ENCODE measurements at regions of chr5 and their contacts with region 1.

Region 1: GRCh38 chr5:147576646-147577535 is 67.0 kb upstream of the DPYSL3 start:
- DNase-seq: peak; percentile 45
- H3K4me3 ChIP-seq: no peak overlapping the region
- H3K27ac ChIP-seq: no peak overlapping the region
- H3K4me1 ChIP-seq: no peaks in the 10 kb centered on the region
- H3K27me3 ChIP-seq: no peaks in the 10 kb centered on the region
- CTCF ChIP-seq: peak; percentile 86 to 92
- POLR2A ChIP-seq: no peak

Region 2: DNA sequence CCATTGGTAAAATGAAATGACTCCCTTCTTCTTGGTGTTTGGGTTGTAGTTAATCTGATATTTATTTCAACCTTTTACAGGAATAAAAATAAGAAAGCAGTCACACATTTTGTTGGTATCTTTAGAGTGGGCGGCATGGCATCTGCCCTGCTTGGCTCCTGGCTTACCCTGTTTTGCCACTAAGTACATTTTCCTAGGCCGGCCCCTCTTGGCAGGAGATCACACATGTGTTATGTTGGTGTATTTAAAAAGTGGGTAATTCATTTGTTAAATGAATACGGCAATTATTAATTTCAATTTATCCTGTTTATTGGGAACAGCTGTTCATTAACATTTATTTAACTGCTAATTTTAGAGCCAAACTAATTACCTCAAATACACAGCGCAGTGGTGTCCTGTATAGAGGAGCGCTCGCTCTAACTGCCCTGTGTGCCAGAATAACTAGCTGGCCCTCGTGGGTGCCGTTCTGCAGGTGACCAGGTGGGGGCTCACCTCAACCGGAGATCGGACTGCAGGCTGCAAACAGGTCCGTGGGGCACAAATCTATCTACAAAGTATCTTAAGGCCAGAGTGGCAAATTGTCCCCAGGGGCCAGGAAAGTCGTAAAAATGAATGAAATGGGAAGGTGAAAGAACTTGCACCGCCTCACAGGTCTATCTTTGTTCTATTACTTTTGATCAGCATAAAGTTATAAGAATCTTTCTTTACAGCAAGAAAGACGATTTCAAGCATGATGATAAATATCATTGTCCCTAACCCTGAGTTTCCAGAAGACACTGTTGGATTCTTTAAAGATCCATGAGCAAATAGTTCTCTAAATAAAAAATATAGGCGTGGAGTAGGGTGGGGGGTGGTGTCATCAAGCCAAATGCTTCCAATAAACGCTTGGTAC is 1034.7 kb before region 1 on chr5:
- CTCF ChIA-PET with region 1: interaction called, 4 read pairs
- POLR2A ChIA-PET with region 1: no interaction called
- dilution Hi-C with region 1: no loop called
- intact Hi-C with region 1: loop called (anchors 10 kb)
- DNase-seq: peak; percentile 66
- H3K4me3 ChIP-seq: no peak overlapping the region
- H3K27ac ChIP-seq: no peak overlapping the region
- H3K4me1 ChIP-seq: no peaks in the 10 kb centered on the region
- H3K27me3 ChIP-seq: peaks cover 0 to 2% of the 10 kb centered on the region in 2 experiments
- CTCF ChIP-seq: peak; percentile 72 to 81
- POLR2A ChIP-seq: no peak

Region 3: DNA sequence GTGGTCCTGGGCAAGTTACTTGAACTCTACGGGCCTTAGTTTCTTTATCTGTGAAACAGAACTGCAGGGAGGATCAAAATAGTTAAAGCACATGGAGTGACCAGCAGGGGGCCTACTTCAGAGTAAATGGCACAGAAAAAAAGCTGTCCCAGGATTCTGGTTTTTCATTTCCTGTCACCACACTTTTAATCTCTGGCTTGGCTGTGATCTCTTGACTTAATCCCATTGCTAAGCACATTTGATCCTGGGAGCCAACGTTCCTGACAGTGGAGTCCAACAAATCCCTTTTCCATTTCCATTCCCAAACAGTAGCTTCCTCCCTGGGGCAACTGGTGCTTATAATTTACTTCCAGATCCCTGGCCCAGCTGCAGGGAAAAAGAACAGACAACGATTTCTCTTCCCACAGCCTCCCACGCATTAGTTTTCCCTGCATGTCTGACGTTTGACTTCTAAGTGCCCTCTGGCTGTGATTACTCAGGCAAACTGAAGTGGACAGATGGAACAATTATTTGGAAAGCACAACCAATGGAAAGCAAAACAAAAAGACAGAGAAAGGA is 478.6 kb before region 1 on chr5:
- CTCF ChIA-PET with region 1: interaction called, 64 read pairs
- POLR2A ChIA-PET with region 1: no interaction called
- dilution Hi-C with region 1: no loop called
- intact Hi-C with region 1: loop called (anchors 1 kb)
- DNase-seq: peak; percentile 23
- H3K4me3 ChIP-seq: no peak overlapping the region
- H3K27ac ChIP-seq: no peak overlapping the region
- H3K4me1 ChIP-seq: no peaks in the 10 kb centered on the region
- H3K27me3 ChIP-seq: no peaks in the 10 kb centered on the region
- CTCF ChIP-seq: peak; percentile 51 to 54
- POLR2A ChIP-seq: no peak

Region 4: DNA sequence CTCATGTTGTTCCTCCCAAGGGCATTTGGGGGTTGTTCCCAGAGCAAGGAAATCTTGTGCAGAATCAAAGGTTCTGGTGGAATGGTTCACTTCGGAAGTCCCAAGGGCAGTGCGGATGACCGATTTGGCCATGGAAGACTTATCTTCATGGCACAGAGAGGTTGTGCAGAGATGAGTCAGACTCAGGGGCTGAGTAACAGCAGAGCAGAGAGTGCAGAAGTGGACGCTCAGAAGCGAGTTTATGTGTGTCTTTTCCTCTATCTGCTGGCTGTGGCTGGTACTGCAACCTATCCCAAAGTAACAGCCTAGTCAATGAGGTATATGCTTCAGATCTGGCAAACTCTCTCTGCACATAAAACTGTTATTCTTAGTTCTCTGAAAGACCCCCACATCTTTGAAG is 185.1 kb before region 1 on chr5:
- CTCF ChIA-PET with region 1: interaction called, 63 read pairs
- POLR2A ChIA-PET with region 1: no interaction called
- dilution Hi-C with region 1: no loop called
- intact Hi-C with region 1: loop called (anchors 1 kb)
- DNase-seq: peak; percentile 80
- H3K4me3 ChIP-seq: no peak overlapping the region
- H3K27ac ChIP-seq: no peak overlapping the region
- H3K4me1 ChIP-seq: peaks cover 12% of the 10 kb centered on the region
- H3K27me3 ChIP-seq: no peaks in the 10 kb centered on the region
- CTCF ChIP-seq: peak; percentile 63 to 73
- POLR2A ChIP-seq: no peak

Region 5: DNA sequence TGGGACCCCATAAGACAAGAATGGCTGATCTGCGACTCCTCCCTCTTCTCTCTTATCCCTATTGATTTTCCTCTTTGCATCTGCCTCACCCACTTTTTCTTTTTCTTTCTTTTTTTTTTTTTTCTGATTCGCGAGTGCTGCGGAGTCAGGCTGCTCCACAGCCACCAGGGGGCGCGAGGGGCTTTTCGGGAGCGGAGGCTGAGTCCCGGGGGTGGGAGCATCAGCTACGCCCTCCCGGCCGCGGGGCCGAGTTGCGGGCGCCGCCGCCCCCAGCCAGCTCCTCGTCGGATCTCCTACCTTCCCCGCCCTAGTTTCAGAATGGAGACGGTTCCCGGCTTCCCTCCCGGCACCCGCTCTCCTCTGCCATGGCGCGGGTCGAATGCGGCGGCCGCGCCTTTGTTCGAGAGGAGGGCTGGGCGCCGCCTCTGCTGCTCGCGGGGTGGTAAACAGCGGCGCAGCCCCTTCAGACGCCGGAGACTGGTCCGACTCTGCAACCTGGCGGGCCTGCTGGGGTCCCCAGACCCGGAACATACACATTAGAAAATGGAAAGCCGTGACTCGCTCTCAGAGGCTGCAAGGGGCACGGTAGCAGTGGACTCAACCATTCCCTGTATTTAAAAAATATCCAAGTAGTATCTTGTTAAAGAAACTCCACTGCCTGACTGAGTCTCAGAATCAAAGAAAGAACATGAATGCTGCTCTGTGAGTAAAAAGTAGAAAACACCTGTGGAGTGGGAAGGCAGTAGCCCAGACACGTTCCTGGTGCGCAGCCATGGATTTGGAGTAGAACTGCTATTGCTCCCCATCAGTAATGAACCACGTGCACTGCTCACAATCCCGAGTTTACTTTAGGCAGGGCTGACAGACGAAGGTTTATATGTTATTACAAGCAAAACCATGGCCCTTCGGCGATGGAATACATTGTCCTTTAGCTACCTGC is 122.7 kb before region 1 on chr5:
- CTCF ChIA-PET with region 1: interaction called, 134 read pairs
- POLR2A ChIA-PET with region 1: interaction called, 3 read pairs
- dilution Hi-C with region 1: no loop called
- intact Hi-C with region 1: loop called (anchors 1 kb)
- DNase-seq: peak; percentile 92
- H3K4me3 ChIP-seq: peak overlapping the region; percentile 43 to 88 (median 55)
- H3K27ac ChIP-seq: peak overlapping the region; percentile 37
- H3K4me1 ChIP-seq: peaks cover 4% of the 10 kb centered on the region
- H3K27me3 ChIP-seq: no peaks in the 10 kb centered on the region
- CTCF ChIP-seq: peak; percentile 90 to 95
- POLR2A ChIP-seq: no peak

Region 6: GRCh38 chr5:147601652-147602051 is 24.8 kb after region 1 on chr5:
- CTCF ChIA-PET with region 1: interaction called, 16 read pairs
- POLR2A ChIA-PET with region 1: no interaction called
- dilution Hi-C with region 1: no loop called
- intact Hi-C with region 1: no loop called
- DNase-seq: no peak
- H3K4me3 ChIP-seq: no peak overlapping the region
- H3K27ac ChIP-seq: no peak overlapping the region
- H3K4me1 ChIP-seq: no peaks in the 10 kb centered on the region
- H3K27me3 ChIP-seq: peaks cover 0 to 4% of the 10 kb centered on the region in 2 experiments
- CTCF ChIP-seq: no peak
- POLR2A ChIP-seq: no peak

Measured in endothelial cell of umbilical vein (primary cell).